ENCODE measurements at regions of chr1 and their contacts with region 1.

Region 1: GRCh38 chr1:168342572-168343280 is 62.0 kb downstream of the TBX19 start:
- DNase-seq: peak; percentile 72
- H3K4me3 ChIP-seq: no peak overlapping the region
- H3K27ac ChIP-seq: no peak overlapping the region
- H3K4me1 ChIP-seq: no peaks in the 10 kb centered on the region
- CTCF ChIP-seq: peak; percentile 72

Region 2: DNA sequence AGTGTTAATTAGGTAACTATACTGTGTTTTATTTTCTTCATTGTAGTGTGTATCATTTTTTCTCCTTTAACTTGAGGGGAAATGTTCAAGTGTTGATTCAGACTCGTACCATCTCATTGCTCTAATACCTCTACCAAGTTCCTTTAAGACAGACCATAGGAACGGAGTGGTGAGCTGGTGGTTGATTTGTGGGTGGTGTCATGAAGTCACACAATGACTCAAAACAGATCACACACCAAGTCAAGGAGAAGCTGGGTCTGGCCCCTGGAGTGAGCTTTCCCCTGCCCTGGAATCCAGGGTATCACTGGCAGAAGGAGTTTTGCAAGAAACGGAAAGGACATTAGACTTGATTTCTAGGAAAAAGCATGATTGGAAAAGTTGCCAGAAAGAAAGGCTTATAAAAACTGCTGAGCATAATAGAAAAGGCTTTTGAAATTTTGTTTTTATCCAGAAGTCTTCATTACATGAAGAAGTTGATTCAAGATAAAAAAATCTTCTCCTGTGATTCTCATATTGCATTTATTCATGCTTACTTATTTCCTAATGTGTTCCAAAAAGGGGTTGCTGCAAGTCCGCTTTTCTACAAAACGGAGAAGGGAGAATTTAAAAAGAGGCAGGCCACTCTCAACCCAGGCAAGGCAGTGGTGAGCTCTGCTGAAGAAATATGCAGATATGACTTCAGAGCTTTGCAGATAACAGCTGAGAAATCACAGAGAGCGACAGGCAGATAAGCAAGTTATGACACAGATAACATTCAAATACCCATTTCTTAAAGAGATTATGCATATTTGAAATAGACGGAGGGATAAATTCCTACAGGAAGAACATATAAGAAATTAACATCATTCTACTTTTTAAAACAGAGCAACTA is 17.7 kb after region 1 on chr1:
- CTCF ChIA-PET with region 1: no interaction called
- POLR2A ChIA-PET with region 1: no interaction called
- intact Hi-C with region 1: no loop called
- DNase-seq: no peak
- H3K4me3 ChIP-seq: no peak overlapping the region
- H3K27ac ChIP-seq: no peak overlapping the region
- H3K4me1 ChIP-seq: no peaks in the 10 kb centered on the region
- CTCF ChIP-seq: no peak

Region 3: GRCh38 chr1:168439456-168440375 is 97.0 kb after region 1 on chr1:
- CTCF ChIA-PET with region 1: no interaction called
- POLR2A ChIA-PET with region 1: no interaction called
- intact Hi-C with region 1: loop called (anchors 10 kb)
- DNase-seq: peak; percentile 50
- H3K4me3 ChIP-seq: no peak overlapping the region
- H3K27ac ChIP-seq: no peak overlapping the region
- H3K4me1 ChIP-seq: no peaks in the 10 kb centered on the region
- CTCF ChIP-seq: peak; percentile 80

Region 4: DNA sequence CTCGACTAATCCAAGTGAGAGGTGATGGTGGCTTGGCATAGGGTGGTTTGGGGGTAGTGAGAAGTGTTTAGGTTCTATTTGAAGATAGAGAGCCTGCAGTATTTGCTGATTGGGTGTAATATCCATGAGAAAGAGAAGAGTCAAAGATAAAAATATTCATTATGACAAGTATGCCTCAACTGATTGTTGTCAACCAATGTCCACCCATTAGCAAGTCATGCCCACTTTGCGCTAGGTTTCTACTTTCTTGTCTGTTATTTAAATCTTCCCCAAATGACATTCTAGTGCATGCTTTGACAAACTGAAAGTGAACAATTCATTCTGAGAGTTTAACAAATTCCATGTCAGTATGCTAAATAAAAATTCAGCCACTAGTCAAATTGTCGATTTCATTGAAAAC is 229.9 kb after region 1 on chr1:
- CTCF ChIA-PET with region 1: no interaction called
- POLR2A ChIA-PET with region 1: no interaction called
- intact Hi-C with region 1: loop called (anchors 5 kb)
- DNase-seq: no peak
- H3K4me3 ChIP-seq: no peak overlapping the region
- H3K27ac ChIP-seq: no peak overlapping the region
- H3K4me1 ChIP-seq: no peaks in the 10 kb centered on the region
- CTCF ChIP-seq: no peak

Measured in OCI-LY7 (cell line).